Right cardiac atrium (tissue), 5 donors: ENCODE measurements at regions of chr1 and their contacts with region 1.

Region 1: GRCh38 chr1:10507111-10507879 is 32.5 kb downstream of the PEX14 start:
- DNase-seq: peak; percentile 59 to 81 (median 71)
- ATAC-seq: peak; percentile 74 to 86
- H3K4me3 ChIP-seq: no peak overlapping the region
- H3K27ac ChIP-seq: no peak overlapping the region
- H3K4me1 ChIP-seq: peaks cover 9% of the 10 kb centered on the region
- H3K27me3 ChIP-seq: no peaks in the 10 kb centered on the region

Region 2: DNA sequence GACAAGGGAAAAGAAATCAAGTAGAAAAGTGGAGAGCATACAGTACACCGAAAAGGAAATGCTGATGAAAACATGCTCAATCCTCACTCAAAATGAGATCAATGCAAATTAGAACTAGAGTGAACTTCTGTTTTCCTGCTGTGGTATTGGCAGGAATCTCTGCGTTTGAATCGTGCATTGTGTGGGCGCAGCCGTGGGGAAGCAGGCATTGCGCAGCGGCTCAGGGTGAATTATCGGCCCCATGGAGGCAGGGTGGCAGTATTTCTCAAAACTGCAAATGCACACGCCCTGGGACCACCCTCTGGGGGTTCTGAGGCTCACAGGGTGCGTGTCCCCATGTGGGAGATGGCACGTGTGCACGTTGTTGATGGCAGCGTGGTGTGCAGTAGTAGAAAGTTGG is 108.0 kb after region 1 on chr1:
- intact Hi-C with region 1: no loop called
- DNase-seq: no peak
- ATAC-seq: no peak
- H3K4me3 ChIP-seq: no peak overlapping the region
- H3K27ac ChIP-seq: no peak overlapping the region
- H3K4me1 ChIP-seq: no peaks in the 10 kb centered on the region
- H3K27me3 ChIP-seq: no peaks in the 10 kb centered on the region

Region 3: GRCh38 chr1:10941891-10942541 is 434.7 kb after region 1 on chr1:
- intact Hi-C with region 1: loop called in 1 of 4 experiments (anchors 10 kb)
- DNase-seq: peak; percentile 54 to 85 (median 79)
- ATAC-seq: peak; percentile 4 to 22
- H3K4me3 ChIP-seq: no peak overlapping the region
- H3K27ac ChIP-seq: no peak overlapping the region
- H3K4me1 ChIP-seq: peaks cover 1% of the 10 kb centered on the region
- H3K27me3 ChIP-seq: no peaks in the 10 kb centered on the region